ENCODE measurements at regions of chr13 and their contacts with region 1.

Region 1: GRCh38 chr13:77697217-77698103 is at the start of gene SLAIN1:
- DNase-seq: peak; percentile 85
- H3K4me3 Mint-ChIP-seq: peak within 1 kb of the TSS; percentile 92
- H3K27ac Mint-ChIP-seq: peak within 1 kb of the TSS; percentile 49
- H3K4me1 Mint-ChIP-seq: peaks cover 32% of the 10 kb centered on the region
- H3K27me3 Mint-ChIP-seq: no peaks in the 10 kb centered on the region
- total RNA-seq, gene SLAIN1: 21.8 to 25.8 TPM

Region 2: DNA sequence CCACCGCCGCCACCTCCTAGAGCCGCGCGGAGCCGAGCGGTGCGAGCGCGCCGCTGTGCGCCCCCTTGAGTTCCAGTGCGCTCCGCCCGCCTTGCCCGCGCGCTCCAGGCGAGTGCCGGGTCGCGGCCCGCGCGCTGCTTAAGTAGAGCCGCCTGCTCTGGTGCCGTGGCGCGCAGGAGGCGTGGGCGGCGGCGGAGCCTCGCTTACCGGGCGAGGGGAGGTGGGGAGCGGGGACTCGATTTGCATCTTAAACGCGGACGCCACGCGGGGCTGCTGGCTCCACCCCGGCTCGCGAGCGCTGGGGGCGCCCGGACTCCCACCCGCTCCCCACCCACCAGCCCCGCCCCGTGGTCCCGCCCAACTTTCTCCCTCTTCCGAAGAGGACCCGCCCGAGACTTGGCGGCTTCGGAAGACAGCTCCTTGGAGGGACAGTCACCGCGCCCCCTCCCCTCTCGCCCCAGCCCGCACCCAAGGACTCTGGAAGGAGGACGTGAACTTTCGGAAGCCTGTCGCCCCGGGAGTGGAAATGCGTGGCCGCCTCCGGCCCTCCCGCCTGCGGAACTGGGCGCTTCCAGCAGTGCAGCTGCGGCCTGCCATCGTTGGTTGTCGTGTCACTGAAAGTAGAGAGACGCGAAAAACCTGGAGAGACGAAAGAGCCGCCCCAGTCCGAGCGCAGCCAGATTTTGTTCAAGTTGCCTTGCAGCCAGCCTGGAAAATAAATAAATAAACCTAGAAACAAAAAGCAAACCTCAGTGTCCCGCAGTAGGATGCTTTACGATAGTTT is 811.0 kb before region 1 on chr13 and contains the start of gene KCTD12:
- CTCF ChIA-PET with region 1: no interaction called
- POLR2A ChIA-PET with region 1: no interaction called
- intact Hi-C with region 1: loop called (anchors 5 kb)
- DNase-seq: peak; percentile 77
- H3K4me3 Mint-ChIP-seq: peak within 1 kb of the TSS; percentile 84
- H3K27ac Mint-ChIP-seq: peak within 1 kb of the TSS; percentile 50
- H3K4me1 Mint-ChIP-seq: peaks cover 30% of the 10 kb centered on the region
- H3K27me3 Mint-ChIP-seq: peaks cover 12% of the 10 kb centered on the region
- total RNA-seq, gene KCTD12: 6.1 to 6.7 TPM

Region 3: DNA sequence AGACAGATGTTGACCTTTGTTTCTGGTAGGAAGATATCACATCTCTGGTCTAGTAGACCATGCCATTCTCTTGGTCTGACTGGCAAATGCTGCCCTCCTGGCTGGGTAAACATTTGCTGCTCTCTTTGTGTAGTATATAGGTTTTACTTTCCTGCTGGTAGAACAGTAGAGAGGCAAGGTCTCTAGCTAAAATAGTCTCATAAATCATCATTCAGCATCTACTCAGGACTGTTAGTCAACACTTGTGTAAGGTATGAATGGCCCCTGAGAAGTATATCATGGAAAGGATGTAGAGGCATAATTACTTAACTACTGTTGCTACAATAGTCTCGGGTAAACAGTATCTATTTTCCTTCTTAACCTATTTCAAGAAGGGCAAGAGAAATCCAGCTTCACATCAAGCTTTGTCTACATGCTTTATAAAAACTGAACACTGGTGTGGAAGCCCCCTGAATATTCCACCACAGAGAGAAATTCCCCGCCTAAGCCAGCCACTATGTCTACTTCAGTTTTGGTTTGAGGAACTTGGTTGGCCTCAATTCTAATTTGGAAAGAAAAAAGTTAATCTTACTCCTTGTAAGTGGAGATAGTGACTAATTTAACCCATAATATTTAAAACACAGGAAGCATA is 352.2 kb before region 1 on chr13:
- CTCF ChIA-PET with region 1: no interaction called
- POLR2A ChIA-PET with region 1: no interaction called
- intact Hi-C with region 1: loop called (anchors 5 kb)
- DNase-seq: peak; percentile 53
- H3K4me3 Mint-ChIP-seq: peak overlapping the region; percentile 51
- H3K27ac Mint-ChIP-seq: peak overlapping the region; percentile 90
- H3K4me1 Mint-ChIP-seq: peaks cover 24% of the 10 kb centered on the region
- H3K27me3 Mint-ChIP-seq: no peaks in the 10 kb centered on the region

Region 4: DNA sequence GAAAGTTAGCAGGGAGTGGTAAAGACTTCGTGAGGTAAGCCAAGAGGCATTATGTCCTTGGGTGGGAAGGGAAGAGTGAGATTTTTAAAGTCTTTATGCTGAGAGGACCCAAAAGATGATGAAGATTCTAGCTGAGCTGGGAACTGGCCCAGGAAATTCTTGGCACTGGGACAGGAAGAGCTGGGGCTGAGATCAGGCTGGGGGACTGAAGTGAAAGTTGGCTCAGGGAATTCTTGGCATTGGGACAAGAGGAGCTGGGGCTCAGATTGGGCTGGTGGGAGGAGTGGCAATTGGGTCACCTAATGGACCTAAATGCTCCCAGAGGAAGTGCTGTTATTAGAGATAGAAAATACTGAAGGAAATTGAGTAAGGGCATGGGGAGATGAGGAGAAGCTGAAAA is 153.1 kb before region 1 on chr13:
- CTCF ChIA-PET with region 1: no interaction called
- POLR2A ChIA-PET with region 1: no interaction called
- intact Hi-C with region 1: no loop called
- DNase-seq: no peak
- H3K4me3 Mint-ChIP-seq: no peak overlapping the region
- H3K27ac Mint-ChIP-seq: no peak overlapping the region
- H3K4me1 Mint-ChIP-seq: no peaks in the 10 kb centered on the region
- H3K27me3 Mint-ChIP-seq: no peaks in the 10 kb centered on the region

Region 5: GRCh38 chr13:77715233-77715891 is 17.9 kb after region 1 on chr13:
- CTCF ChIA-PET with region 1: interaction called, 3 read pairs
- POLR2A ChIA-PET with region 1: interaction called, 5 read pairs
- intact Hi-C with region 1: loop called (anchors 1 kb)
- DNase-seq: no peak
- H3K4me3 Mint-ChIP-seq: no peak overlapping the region
- H3K27ac Mint-ChIP-seq: peak overlapping the region; percentile 53
- H3K4me1 Mint-ChIP-seq: peaks cover 42% of the 10 kb centered on the region
- H3K27me3 Mint-ChIP-seq: no peaks in the 10 kb centered on the region

Region 6: GRCh38 chr13:77737583-77738200 is 40.2 kb after region 1 on chr13:
- CTCF ChIA-PET with region 1: interaction called, 6 read pairs
- POLR2A ChIA-PET with region 1: interaction called, 3 read pairs
- intact Hi-C with region 1: loop called (anchors 1 kb)
- DNase-seq: peak; percentile 54
- H3K4me3 Mint-ChIP-seq: no peak overlapping the region
- H3K27ac Mint-ChIP-seq: no peak overlapping the region
- H3K4me1 Mint-ChIP-seq: peaks cover 17% of the 10 kb centered on the region
- H3K27me3 Mint-ChIP-seq: no peaks in the 10 kb centered on the region

Region 7: DNA sequence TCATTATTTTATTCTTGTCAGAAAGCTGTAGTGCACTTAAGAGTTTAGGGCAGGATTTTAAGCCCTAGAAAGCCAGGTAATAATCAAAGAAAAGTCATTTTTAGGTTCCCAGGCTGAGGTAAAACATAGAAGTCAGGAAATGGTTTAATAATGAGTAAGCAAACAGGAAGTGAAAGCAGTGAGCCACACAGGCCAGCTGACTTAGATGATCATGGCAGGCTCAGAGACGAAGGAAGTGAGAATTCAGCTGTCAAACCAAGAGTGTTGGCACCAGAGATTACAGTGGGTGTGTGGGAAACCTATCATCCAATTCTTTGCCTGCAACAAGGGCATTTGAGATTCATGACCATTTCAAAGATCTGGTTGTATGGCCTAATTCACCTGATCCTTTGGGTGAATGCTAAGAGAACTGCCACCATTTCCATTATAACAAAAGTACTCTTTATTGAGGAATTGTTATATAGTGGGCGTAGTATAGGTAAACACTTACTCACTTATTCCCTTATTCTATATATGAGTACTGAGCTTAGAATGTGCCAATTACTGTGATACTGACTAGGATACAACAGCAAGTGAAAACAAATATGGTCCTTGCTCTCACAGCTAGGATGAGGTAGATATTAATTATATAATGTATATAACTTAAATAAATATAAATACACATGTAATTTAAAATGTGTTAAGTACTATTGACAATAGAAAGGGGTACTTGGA is 324.9 kb after region 1 on chr13:
- CTCF ChIA-PET with region 1: no interaction called
- POLR2A ChIA-PET with region 1: no interaction called
- intact Hi-C with region 1: loop called (anchors 10 kb)
- DNase-seq: peak; percentile 68
- H3K4me3 Mint-ChIP-seq: no peak overlapping the region
- H3K27ac Mint-ChIP-seq: no peak overlapping the region
- H3K4me1 Mint-ChIP-seq: peaks cover 7% of the 10 kb centered on the region
- H3K27me3 Mint-ChIP-seq: peaks cover 5% of the 10 kb centered on the region

Measured in activated CD4-positive, alpha-beta memory T cell treated with anti-CD3 and anti-CD28 coated beads for 36 hours (primary cell).